CD4-positive, alpha-beta T cell (primary cell): ENCODE measurements at regions of chr7 and their contacts with region 1.

Region 1: DNA sequence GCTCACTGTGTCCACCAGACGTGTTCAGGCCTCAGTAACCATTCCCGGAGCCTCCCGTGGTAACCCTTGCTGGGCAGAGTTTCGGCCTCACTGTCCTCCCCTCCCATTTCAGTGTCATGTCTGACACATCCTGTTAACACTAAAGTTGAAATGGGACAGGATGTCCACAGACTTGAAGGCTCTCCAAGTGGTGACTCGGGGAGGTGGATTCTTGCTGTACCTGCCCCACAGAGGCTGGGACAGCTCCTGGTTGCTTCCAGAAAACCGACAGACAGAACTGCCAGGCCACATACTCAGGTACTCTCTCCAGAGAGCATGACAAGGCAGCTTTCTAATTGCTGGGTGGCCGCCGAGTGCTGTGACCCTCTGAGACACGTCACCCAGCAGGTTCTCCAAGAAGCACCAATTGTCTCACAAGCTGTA is 17.9 kb upstream of the CYTH3 start:
- DNase-seq: no peak
- ATAC-seq: no peak
- H3K4me3 ChIP-seq: no peak overlapping the region
- H3K4me3 Mint-ChIP-seq: no peak overlapping the region
- H3K27ac ChIP-seq: no peak overlapping the region
- H3K27ac Mint-ChIP-seq: no peak overlapping the region
- H3K4me1 ChIP-seq: no peaks in the 10 kb centered on the region
- H3K4me1 Mint-ChIP-seq: no peaks in the 10 kb centered on the region
- H3K27me3 ChIP-seq: no peaks in the 10 kb centered on the region
- H3K27me3 Mint-ChIP-seq: no peaks in the 10 kb centered on the region
- CTCF ChIP-seq: no peak

Region 2: GRCh38 chr7:6181136-6181535 is 109.2 kb before region 1 on chr7:
- CTCF ChIA-PET with region 1: no interaction called
- POLR2A ChIA-PET with region 1: no interaction called
- intact Hi-C with region 1: no loop called
- DNase-seq: no peak
- ATAC-seq: no peak
- H3K4me3 ChIP-seq: no peak overlapping the region
- H3K4me3 Mint-ChIP-seq: no peak overlapping the region
- H3K27ac ChIP-seq: no peak overlapping the region
- H3K27ac Mint-ChIP-seq: no peak overlapping the region
- H3K4me1 ChIP-seq: no peaks in the 10 kb centered on the region
- H3K4me1 Mint-ChIP-seq: no peaks in the 10 kb centered on the region
- H3K27me3 ChIP-seq: no peaks in the 10 kb centered on the region
- H3K27me3 Mint-ChIP-seq: no peaks in the 10 kb centered on the region
- CTCF ChIP-seq: no peak

Region 3: GRCh38 chr7:6205971-6206660 is 84.2 kb before region 1 on chr7:
- CTCF ChIA-PET with region 1: no interaction called
- POLR2A ChIA-PET with region 1: no interaction called
- intact Hi-C with region 1: loop called in 1 of 2 experiments (anchors 10 kb)
- DNase-seq: no peak
- ATAC-seq: no peak
- H3K4me3 ChIP-seq: no peak overlapping the region
- H3K4me3 Mint-ChIP-seq: no peak overlapping the region
- H3K27ac ChIP-seq: no peak overlapping the region
- H3K27ac Mint-ChIP-seq: no peak overlapping the region
- H3K4me1 ChIP-seq: no peaks in the 10 kb centered on the region
- H3K4me1 Mint-ChIP-seq: no peaks in the 10 kb centered on the region
- H3K27me3 ChIP-seq: no peaks in the 10 kb centered on the region
- H3K27me3 Mint-ChIP-seq: no peaks in the 10 kb centered on the region
- CTCF ChIP-seq: no peak

Region 4: DNA sequence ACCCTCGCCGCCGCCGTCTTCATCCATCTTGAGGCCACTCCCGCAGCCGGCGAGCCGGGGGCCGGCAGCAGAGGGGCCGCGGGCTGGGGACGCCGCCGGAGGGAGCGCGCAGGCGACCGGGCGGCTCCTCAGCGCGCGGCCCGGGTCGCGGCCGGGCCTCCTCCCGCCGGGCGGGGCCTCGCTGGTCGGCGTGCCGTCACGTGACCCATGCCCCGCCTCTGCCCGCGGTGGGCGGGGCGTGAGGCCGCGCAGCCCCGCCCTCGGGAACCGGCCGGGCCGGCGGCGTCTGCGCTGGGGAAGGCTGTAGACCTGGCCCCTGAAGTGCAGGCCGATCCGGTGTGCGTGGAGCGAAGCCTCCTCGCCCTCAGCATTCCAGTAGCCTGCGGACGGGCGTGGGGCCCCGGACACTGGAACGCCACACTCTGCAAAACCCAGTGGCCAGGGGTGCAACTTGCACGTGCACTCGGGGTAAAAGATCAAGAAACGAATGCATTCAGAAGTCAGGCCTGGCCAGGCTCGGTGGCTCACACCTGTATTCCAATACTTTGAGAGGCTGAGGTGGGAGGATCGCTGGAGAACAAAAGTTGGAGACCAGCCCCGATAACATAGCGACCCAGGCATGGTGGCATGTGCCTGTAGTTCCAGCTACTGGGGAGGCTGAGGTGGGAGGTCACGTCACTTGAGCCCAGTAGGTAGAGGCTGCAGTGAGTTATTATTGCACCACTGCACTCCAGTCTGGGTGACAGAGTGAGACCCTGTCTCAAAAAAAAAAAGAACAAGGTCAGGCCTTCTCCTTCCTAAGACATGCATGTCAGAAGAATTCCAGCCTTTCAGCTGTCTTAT is 17.6 kb before region 1 on chr7 and contains the start of gene CYTH3:
- CTCF ChIA-PET with region 1: no interaction called
- POLR2A ChIA-PET with region 1: no interaction called
- intact Hi-C with region 1: no loop called
- DNase-seq: peak; percentile 39 to 91 (median 72)
- ATAC-seq: peak; percentile 82
- H3K4me3 ChIP-seq: peak within 1 kb of the TSS; percentile 74
- H3K4me3 Mint-ChIP-seq: peak within 1 kb of the TSS; percentile 91
- H3K27ac ChIP-seq: no peak within 1 kb of the TSS
- H3K27ac Mint-ChIP-seq: no peak within 1 kb of the TSS
- H3K4me1 ChIP-seq: peaks cover 21% of the 10 kb centered on the region
- H3K4me1 Mint-ChIP-seq: peaks cover 20% of the 10 kb centered on the region
- H3K27me3 ChIP-seq: no peaks in the 10 kb centered on the region
- H3K27me3 Mint-ChIP-seq: peaks cover 6% of the 10 kb centered on the region
- CTCF ChIP-seq: no peak
- total RNA-seq, gene CYTH3: 7.6 to 9.1 TPM

Region 5: GRCh38 chr7:6323967-6324701 is 33.8 kb after region 1 on chr7:
- CTCF ChIA-PET with region 1: no interaction called
- POLR2A ChIA-PET with region 1: no interaction called
- intact Hi-C with region 1: no loop called
- DNase-seq: no peak
- ATAC-seq: no peak
- H3K4me3 ChIP-seq: no peak overlapping the region
- H3K4me3 Mint-ChIP-seq: no peak overlapping the region
- H3K27ac ChIP-seq: no peak overlapping the region
- H3K27ac Mint-ChIP-seq: no peak overlapping the region
- H3K4me1 ChIP-seq: peaks cover 3% of the 10 kb centered on the region
- H3K4me1 Mint-ChIP-seq: no peaks in the 10 kb centered on the region
- H3K27me3 ChIP-seq: no peaks in the 10 kb centered on the region
- H3K27me3 Mint-ChIP-seq: no peaks in the 10 kb centered on the region
- CTCF ChIP-seq: no peak